ENCODE measurements at regions of chr7 and their contacts with region 1.

Region 1: DNA sequence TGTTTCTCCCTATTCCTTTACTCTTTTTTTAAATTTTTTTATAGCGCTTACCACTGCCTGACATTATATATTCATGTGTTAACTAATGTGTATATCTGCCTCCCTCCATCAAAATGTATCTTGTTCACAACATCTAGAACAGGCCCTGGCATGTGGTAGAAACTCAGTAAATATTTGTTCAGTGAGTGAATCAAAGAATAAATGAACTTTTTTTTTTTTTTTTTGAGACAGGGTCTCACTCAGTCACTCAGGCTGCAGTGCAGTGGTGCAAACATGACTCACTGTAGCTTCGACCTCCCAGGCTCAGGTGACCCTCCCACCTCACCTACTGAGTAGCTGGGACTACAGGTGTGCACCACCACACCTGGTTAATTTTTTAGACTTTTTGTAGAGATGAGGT is 7.5 kb upstream of the CALD1 start:
- DNase-seq: no peak
- H3K4me3 ChIP-seq: no peak overlapping the region
- H3K27ac ChIP-seq: no peak overlapping the region
- H3K4me1 ChIP-seq: no peaks in the 10 kb centered on the region
- H3K27me3 ChIP-seq: no peaks in the 10 kb centered on the region
- CTCF ChIP-seq: no peak
- EP300 ChIP-seq: no peak
- POLR2A ChIP-seq: no peak

Region 2: DNA sequence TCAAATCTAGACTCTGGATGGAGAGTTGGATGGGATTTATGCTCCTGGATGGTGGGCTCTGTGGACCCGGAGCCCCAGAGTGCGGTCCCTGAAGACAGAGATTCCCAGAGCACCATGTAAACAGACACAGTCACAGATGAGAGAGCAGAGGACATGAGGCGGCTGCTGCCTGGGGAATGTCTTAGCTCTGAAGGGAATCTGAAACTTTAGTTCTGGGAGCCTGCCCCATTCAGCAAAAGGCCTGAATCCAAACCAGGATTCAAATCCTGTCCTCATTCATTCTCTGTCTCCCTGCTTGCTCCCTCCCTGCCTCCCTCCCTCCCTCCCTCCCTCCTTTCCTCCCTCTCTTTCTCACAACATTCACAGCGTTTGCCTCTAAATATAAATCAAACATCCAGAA is 42.0 kb before region 1 on chr7:
- in situ Hi-C with region 1: no loop called
- intact Hi-C with region 1: loop called (anchors 2 kb)
- DNase-seq: no peak
- H3K4me3 ChIP-seq: no peak overlapping the region
- H3K27ac ChIP-seq: peak overlapping the region; percentile 69 to 88 (median 84)
- H3K4me1 ChIP-seq: peaks cover 0 to 14% (median 9%) of the 10 kb centered on the region in 4 donors
- H3K27me3 ChIP-seq: no peaks in the 10 kb centered on the region
- CTCF ChIP-seq: no peak
- EP300 ChIP-seq: no peak
- POLR2A ChIP-seq: no peak

Measured in transverse colon (tissue), 4 donors.